ENCODE measurements at regions of chr14 and their contacts with region 1.

Region 1: GRCh38 chr14:104932676-104933631 is 8.3 kb downstream of the PLD4 start:
- DNase-seq: peak; percentile 93

Region 2: GRCh38 chr14:104968153-104968527 is 35.2 kb after region 1 on chr14:
- intact Hi-C with region 1: loop called (anchors 5 kb)
- DNase-seq: no peak